WTC11 (cell line): ENCODE measurements at regions of chr3 and their contacts with region 1.

Region 1: GRCh38 chr3:184371570-184372018 is 6.4 kb downstream of the THPO start:
- DNase-seq: peak; percentile 82
- ATAC-seq: peak; percentile 86
- H3K4me3 Mint-ChIP-seq: no peak overlapping the region
- H3K27ac Mint-ChIP-seq: peak overlapping the region; percentile 73; the same call in 1 of the 2 replicates
- H3K4me1 Mint-ChIP-seq: peaks cover 51% of the 10 kb centered on the region
- H3K27me3 Mint-ChIP-seq: peaks cover 4% of the 10 kb centered on the region
- CTCF ChIP-seq: peak; percentile 72

Region 2: DNA sequence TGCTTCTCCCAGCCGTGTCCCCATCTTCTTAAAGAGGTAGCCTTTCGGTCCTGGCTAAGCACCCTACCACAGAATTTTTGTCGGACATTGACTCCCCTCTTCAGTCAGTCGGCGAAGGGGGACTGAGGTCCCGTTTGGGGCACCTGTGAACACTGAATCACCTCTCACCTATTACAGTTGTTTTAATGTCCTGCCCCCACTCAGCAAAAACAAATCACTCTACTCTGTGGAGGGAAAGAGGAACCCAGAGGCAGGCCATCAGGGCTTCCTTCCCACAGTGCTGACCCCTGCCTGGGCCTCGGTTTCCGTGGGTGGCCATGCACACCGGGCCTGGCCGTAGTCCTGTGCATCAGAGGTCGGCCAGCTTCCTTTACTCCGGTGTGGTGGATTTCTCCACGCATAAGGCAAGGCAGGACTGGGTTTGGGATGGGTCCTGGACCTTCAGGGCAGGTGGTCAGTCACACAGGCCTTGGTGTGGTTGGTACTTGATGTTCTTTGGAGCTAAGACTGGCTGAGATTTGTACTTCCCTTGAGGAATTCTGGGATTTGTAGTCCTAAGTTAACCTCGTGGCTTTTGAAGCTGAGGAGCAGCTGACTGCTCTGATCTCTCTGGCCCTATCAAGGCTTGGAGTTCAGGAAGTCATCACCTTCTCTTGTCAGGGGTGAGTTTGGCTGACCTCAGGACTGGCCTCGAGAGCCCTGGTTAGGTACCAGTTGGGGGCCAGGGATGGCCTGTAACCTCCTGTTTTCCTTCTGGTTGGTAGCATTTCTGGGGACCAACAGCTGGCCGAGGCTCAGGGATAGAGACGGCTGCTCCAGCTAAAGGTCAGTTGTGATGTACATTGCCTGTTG is 34.8 kb before region 1 on chr3:
- CTCF ChIA-PET with region 1: interaction called, 25 read pairs
- POLR2A ChIA-PET with region 1: no interaction called
- DNase-seq: no peak
- ATAC-seq: peak; percentile 6
- H3K4me3 Mint-ChIP-seq: peak overlapping the region; percentile 92
- H3K27ac Mint-ChIP-seq: peak overlapping the region; percentile 93
- H3K4me1 Mint-ChIP-seq: peaks cover 40% of the 10 kb centered on the region
- H3K27me3 Mint-ChIP-seq: no peaks in the 10 kb centered on the region
- CTCF ChIP-seq: no peak

Region 3: DNA sequence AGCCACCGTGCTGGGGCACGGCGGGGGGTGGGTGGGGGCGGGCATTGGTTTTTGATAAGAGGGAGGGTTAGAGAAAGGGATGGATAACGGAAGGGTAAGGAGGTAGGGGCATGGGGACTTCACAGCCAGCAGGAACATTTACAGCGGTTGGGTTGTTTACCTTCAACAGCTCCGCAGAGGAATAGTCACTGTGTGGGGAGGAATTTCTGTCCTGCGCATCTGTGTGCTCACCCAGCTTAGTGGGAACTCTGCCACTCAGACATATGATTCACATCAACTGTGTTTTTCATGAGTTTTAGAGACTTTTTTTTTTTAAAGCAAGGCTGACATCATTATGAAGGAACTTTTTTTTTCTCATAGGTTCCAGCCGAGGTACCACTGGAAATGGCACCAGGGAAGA is 27.8 kb after region 1 on chr3:
- CTCF ChIA-PET with region 1: interaction called, 11 read pairs
- POLR2A ChIA-PET with region 1: no interaction called
- DNase-seq: no peak
- ATAC-seq: peak; percentile 53
- H3K4me3 Mint-ChIP-seq: no peak overlapping the region
- H3K27ac Mint-ChIP-seq: no peak overlapping the region
- H3K4me1 Mint-ChIP-seq: 0 out of 2 replicates have a peak, but pooled peaks cover 3% of the 10 kb centered on the region
- H3K27me3 Mint-ChIP-seq: no peaks in the 10 kb centered on the region
- CTCF ChIP-seq: no peak

Region 4: GRCh38 chr3:184474897-184475296 is 103.3 kb after region 1 on chr3:
- CTCF ChIA-PET with region 1: interaction called, 83 read pairs
- POLR2A ChIA-PET with region 1: no interaction called
- DNase-seq: no peak
- ATAC-seq: no peak
- H3K4me3 Mint-ChIP-seq: no peak overlapping the region
- H3K27ac Mint-ChIP-seq: no peak overlapping the region
- H3K4me1 Mint-ChIP-seq: peaks cover 11% of the 10 kb centered on the region
- H3K27me3 Mint-ChIP-seq: no peaks in the 10 kb centered on the region
- CTCF ChIP-seq: no peak

Region 5: DNA sequence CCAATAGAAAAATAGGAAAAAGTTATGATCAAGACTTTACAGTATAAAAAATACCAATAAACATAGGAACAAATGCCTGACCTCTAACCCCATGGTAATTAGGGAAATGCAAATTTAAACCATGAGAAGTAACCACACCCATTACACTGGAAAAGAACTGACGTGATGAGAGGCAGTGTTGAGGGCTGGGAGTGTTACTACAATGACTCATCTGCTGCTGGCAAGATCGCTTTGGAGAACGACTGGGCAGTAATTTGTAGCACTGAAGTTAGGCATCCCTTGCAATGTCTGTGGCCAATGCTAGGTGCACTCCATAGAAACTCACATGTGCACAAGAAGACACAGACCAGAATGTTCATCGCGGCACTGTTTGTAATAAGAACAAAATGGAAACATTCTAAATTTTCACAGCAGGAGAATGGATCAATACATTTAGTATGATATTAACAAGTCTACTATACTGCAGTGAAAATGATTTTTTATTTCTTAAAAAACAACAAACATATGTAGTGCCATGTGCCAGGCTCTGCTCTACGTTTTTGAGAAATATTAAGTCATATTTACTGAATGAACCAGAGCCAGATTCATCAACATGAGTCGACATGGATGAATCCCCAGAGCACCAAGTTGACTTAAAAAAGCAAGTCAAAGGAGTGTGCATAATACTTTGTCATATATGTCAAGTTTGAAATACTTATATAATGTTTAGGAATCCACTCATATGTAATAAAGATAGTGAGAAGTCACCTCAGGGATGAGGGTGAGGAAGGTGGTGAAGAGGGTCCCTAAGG is 152.4 kb after region 1 on chr3:
- CTCF ChIA-PET with region 1: interaction called, 28 read pairs
- POLR2A ChIA-PET with region 1: interaction called, 3 read pairs
- DNase-seq: no peak
- ATAC-seq: peak; percentile 15
- H3K4me3 Mint-ChIP-seq: peak overlapping the region; percentile 52
- H3K27ac Mint-ChIP-seq: peak overlapping the region; percentile 96
- H3K4me1 Mint-ChIP-seq: peaks cover 37% of the 10 kb centered on the region
- H3K27me3 Mint-ChIP-seq: no peaks in the 10 kb centered on the region
- CTCF ChIP-seq: no peak

Region 6: GRCh38 chr3:184777336-184778004 is 405.9 kb after region 1 on chr3:
- CTCF ChIA-PET with region 1: interaction called, 10 read pairs
- POLR2A ChIA-PET with region 1: no interaction called
- DNase-seq: peak; percentile 93
- ATAC-seq: peak; percentile 81
- H3K4me3 Mint-ChIP-seq: no peak overlapping the region
- H3K27ac Mint-ChIP-seq: no peak overlapping the region
- H3K4me1 Mint-ChIP-seq: peaks cover 43% of the 10 kb centered on the region
- H3K27me3 Mint-ChIP-seq: no peaks in the 10 kb centered on the region; the same call in none of the 2 replicates
- CTCF ChIP-seq: peak; percentile 74